ENCODE measurements at regions of chr6 and their contacts with region 1.

Region 1: GRCh38 chr6:27893059-27893835 is 18.9 kb downstream of the OR2B2 start:
- DNase-seq: peak; percentile 98
- H3K4me3 ChIP-seq: peak overlapping the region; percentile 65 to 98 (median 86)
- H3K27ac ChIP-seq: peak overlapping the region; percentile 94
- H3K4me1 ChIP-seq: peaks cover 22% of the 10 kb centered on the region
- H3K27me3 ChIP-seq: no peaks in the 10 kb centered on the region
- CTCF ChIP-seq: no peak
- POLR2A ChIP-seq: peak; percentile 96

Region 2: DNA sequence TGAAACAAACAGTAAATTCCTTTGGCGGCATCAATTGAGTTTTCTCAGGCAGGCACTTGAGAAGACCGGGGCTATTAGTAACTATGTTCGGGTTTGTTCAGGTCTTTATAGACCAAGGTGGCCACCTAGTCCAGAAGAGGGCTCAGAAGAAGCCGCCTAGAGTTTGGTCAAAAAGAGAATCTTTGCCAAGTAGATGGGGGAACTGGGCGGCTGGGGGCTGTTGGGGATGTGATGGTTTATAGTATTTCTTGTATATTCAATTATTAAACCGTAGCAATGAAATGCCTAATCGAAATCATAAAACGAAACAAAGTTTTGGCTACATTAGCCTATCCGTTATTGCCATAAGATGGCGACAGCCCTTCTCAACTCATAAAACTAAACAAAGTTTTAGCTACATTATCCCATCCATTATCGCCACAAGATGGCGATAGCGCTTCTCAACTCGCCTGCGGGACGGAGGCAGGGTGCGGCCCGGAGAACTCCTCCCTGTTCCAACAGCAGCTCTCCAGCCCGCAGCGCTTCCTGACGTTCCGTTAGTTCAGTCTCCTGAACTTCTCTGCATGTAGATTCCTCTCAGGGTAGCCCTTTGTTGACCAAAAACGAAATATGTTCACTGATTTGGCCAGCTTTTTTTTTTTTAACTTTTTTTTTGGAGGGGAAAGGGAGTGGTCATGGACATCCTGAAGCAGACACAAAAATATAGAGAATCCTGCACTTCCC is 766.3 kb before region 1 on chr6:
- CTCF ChIA-PET with region 1: interaction called, 18 read pairs
- POLR2A ChIA-PET with region 1: interaction called, 11 read pairs
- dilution Hi-C with region 1: no loop called
- intact Hi-C with region 1: loop called (anchors 1 kb)
- DNase-seq: peak; percentile 92
- H3K4me3 ChIP-seq: peak overlapping the region in 2 of 3 experiments; percentile 24 to 28
- H3K27ac ChIP-seq: no peak overlapping the region
- H3K4me1 ChIP-seq: peaks cover 10% of the 10 kb centered on the region
- H3K27me3 ChIP-seq: no peaks in the 10 kb centered on the region
- CTCF ChIP-seq: peak; percentile 71 to 73
- POLR2A ChIP-seq: peak; percentile 46

Region 3: DNA sequence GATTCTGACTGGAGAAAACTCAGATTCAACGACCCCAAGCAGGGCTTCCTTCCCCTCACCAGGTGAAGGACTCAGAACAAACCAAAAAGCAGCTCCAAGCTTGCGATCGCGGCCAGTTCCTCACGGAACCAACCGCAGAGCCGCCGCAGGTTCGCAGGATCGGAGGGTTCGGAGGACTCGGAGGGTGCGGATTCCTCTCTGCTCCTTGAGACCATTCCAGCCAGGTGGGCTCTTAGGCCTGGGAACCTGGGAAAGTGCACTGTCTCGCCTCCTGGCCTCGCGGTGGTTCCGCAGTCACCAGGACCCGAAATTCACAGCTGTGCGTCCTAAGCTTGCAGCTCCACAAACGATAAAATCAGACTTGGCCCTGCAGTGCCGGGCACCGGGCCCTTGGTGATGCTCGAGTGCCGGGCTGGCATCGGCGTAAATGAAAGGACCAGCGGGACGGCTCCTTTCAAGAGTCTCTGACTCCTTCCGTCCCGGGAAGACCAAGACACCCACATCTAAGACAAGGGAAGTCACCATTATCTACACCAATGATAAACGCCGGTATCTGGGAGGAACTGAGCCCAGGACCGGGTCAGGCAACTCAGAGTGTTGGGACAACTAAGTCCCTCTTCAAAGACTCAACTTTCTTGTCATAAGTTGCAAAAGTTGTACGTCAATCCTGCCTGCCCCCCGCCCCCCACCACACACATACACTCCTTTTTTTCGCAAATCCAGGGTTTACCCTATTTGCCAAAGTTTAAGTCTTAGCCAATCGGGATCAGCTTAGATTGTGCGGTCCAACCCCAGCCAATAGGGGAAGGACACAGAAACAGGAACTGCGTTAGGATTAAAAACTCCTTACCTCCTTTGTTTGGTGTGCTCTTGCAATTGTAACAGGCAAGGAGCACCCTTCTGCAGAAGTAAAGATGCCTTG is 715.5 kb before region 1 on chr6:
- CTCF ChIA-PET with region 1: interaction called, 19 read pairs
- POLR2A ChIA-PET with region 1: no interaction called
- dilution Hi-C with region 1: no loop called
- intact Hi-C with region 1: loop called (anchors 2 kb)
- DNase-seq: peak; percentile 88
- H3K4me3 ChIP-seq: peak overlapping the region; percentile 34 to 94 (median 77)
- H3K27ac ChIP-seq: peak overlapping the region; percentile 41
- H3K4me1 ChIP-seq: no peaks in the 10 kb centered on the region
- H3K27me3 ChIP-seq: peaks cover 8 to 18% of the 10 kb centered on the region in 2 experiments
- CTCF ChIP-seq: peak; percentile 45 to 60
- POLR2A ChIP-seq: no peak

Region 4: GRCh38 chr6:27617700-27618689 is 275.3 kb before region 1 on chr6:
- CTCF ChIA-PET with region 1: interaction called, 3 read pairs
- POLR2A ChIA-PET with region 1: no interaction called
- dilution Hi-C with region 1: no loop called
- intact Hi-C with region 1: loop called (anchors 10 kb)
- DNase-seq: peak; percentile 40
- H3K4me3 ChIP-seq: peak overlapping the region; percentile 20 to 68 (median 55)
- H3K27ac ChIP-seq: no peak overlapping the region
- H3K4me1 ChIP-seq: peaks cover 7% of the 10 kb centered on the region
- H3K27me3 ChIP-seq: peaks cover 0 to 7% of the 10 kb centered on the region in 2 experiments
- CTCF ChIP-seq: no peak
- POLR2A ChIP-seq: no peak

Region 5: DNA sequence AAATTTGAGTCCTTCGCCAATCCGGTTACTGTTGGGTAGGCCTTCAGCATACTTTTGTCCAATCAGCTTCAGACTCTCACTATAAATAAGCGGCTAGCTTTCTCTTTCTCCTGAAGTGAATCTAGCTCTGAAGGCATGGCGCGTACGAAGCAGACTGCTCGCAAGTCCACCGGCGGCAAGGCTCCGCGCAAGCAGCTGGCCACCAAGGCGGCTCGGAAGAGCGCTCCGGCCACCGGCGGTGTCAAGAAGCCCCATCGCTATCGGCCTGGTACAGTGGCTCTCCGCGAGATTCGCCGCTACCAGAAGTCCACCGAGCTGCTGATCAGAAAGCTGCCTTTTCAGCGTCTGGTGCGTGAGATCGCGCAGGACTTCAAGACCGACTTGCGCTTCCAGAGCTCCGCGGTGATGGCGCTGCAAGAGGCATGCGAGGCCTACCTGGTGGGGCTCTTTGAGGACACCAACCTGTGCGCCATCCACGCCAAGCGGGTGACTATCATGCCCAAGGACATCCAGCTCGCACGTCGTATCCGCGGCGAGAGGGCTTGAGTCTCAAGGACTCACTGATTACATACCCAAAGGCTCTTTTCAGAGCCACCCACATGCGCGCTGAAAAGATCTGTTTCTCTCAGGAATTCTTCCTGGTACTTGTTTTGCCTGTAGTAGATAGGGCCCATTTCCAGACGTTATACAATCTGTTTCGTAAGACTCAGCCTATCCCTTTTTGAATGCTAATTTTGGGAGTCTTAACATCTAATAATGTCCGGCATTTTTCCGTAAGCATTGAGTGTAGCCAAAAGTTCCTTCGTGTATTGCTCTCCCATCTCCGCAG is 83.1 kb before region 1 on chr6:
- CTCF ChIA-PET with region 1: interaction called, 62 read pairs
- POLR2A ChIA-PET with region 1: interaction called, 99 read pairs
- dilution Hi-C with region 1: no loop called
- intact Hi-C with region 1: loop called (anchors 1 kb)
- DNase-seq: peak; percentile 99
- H3K4me3 ChIP-seq: peak overlapping the region; percentile 4 to 77 (median 70)
- H3K27ac ChIP-seq: peak overlapping the region; percentile 59
- H3K4me1 ChIP-seq: peaks cover 29% of the 10 kb centered on the region
- H3K27me3 ChIP-seq: no peaks in the 10 kb centered on the region
- CTCF ChIP-seq: peak in 1 of 2 donors; percentile 25
- POLR2A ChIP-seq: peak; percentile 99

Region 6: GRCh38 chr6:27871924-27872638 is 21.2 kb before region 1 on chr6:
- CTCF ChIA-PET with region 1: interaction called, 37 read pairs
- POLR2A ChIA-PET with region 1: interaction called, 130 read pairs
- dilution Hi-C with region 1: no loop called
- intact Hi-C with region 1: loop called (anchors 1 kb)
- DNase-seq: peak; percentile 99
- H3K4me3 ChIP-seq: peak overlapping the region; percentile 65 to 96 (median 82)
- H3K27ac ChIP-seq: peak overlapping the region; percentile 80
- H3K4me1 ChIP-seq: peaks cover 16% of the 10 kb centered on the region
- H3K27me3 ChIP-seq: no peaks in the 10 kb centered on the region
- CTCF ChIP-seq: peak in 1 of 2 donors; percentile 37
- POLR2A ChIP-seq: peak; percentile 94

Region 7: DNA sequence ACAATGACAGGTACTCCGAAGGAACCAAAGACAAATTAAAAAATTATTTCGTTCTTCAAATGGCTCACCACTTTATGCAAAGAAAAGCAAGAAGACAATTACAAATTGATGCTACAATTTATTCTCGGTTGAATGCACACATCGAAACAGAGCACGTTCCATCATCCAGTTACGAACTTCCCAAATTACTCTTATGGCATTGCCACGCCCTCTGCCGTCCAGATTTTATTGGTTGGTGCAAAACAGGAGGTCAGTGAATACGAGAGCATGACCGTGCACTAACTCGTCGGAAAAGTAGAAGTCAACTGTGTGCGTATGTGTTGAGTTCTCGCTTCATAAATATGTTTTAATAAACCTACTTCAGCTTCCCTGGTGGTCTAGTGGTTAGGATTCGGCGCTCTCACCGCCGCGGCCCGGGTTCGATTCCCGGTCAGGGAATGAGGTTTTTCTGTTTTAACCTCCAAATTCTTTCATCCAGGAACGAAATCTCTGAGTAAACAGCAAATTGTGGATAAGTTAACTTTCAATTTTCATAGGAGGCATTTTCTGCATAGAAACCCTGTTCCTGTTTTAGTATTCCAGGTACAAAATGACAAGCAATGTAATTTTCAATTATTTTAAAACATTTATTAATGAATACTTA is 1088.7 kb after region 1 on chr6:
- CTCF ChIA-PET with region 1: no interaction called
- POLR2A ChIA-PET with region 1: no interaction called
- dilution Hi-C with region 1: no loop called
- intact Hi-C with region 1: loop called (anchors 5 kb)
- DNase-seq: peak; percentile 94
- H3K4me3 ChIP-seq: peak overlapping the region; percentile 44 to 82 (median 60)
- H3K27ac ChIP-seq: peak overlapping the region; percentile 42
- H3K4me1 ChIP-seq: peaks cover 25% of the 10 kb centered on the region
- H3K27me3 ChIP-seq: no peaks in the 10 kb centered on the region
- CTCF ChIP-seq: no peak
- POLR2A ChIP-seq: no peak